A673 (cell line): ENCODE measurements at regions of chr3 and their contacts with region 1.

Region 1: DNA sequence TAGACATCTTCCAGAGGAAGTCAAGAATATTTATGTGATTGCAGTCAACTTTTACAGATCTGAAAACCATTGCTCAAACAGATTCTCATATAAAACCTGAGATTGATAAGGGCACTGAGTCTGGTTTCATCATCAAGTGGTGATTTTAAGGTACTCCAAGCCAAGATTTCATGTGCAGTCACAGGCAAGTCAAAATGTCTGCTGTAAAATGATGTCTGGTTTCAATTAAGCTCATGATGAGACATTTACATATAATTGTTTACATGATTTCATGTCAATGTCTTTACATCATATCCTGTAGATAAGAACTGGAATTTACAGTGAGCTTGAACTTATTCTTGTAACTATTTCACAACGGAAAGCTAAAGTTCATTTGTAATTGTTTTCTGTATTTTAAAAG is 1215.5 kb downstream of the ROBO2 start:
- DNase-seq: peak; percentile 68
- H3K4me3 ChIP-seq: no peak overlapping the region
- H3K27ac ChIP-seq: no peak overlapping the region
- H3K4me1 ChIP-seq: peaks cover 28% of the 10 kb centered on the region
- H3K27me3 ChIP-seq: no peaks in the 10 kb centered on the region
- CTCF ChIP-seq: no peak

Region 2: GRCh38 chr3:78076379-78076778 is 179.0 kb before region 1 on chr3:
- CTCF ChIA-PET with region 1: no interaction called
- POLR2A ChIA-PET with region 1: no interaction called
- intact Hi-C with region 1: no loop called
- DNase-seq: no peak
- H3K4me3 ChIP-seq: no peak overlapping the region
- H3K27ac ChIP-seq: no peak overlapping the region
- H3K4me1 ChIP-seq: no peaks in the 10 kb centered on the region
- H3K27me3 ChIP-seq: no peaks in the 10 kb centered on the region
- CTCF ChIP-seq: no peak

Region 3: DNA sequence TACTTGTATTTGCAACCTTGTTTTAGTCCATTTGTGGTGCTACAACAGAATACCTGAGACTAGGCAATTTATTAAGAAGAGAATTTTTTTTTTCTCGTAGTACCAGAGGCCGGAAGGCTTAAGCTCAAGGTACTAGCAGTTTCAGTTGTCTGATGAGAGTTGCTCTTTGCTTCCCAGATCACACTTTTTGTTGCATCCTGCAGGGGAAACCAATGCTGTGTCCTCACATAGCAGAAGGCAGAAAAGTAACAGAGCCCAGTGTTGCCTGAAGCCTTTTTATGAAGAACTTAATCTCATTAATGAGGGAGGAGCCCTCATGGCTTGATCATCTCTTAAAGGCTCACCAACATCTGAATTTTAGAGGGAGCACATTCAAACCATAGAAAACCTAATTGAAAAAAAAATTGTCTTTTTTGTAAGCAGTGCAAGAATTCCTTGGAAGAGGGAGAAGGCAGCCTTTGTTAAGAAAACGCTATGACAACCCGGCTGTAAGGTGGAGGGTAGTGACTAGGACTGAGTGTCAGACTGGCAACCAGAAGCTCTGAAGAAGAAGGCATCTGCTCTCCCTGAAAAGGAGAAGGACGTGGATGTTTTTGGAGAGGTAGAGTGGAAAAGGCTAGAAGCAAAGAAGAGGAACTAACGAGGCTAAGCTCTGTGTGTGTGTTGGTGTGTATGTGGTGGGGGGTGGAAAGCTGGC is 29.8 kb after region 1 on chr3:
- CTCF ChIA-PET with region 1: no interaction called
- POLR2A ChIA-PET with region 1: interaction called, 19 read pairs
- intact Hi-C with region 1: no loop called
- DNase-seq: peak; percentile 42
- H3K4me3 ChIP-seq: no peak overlapping the region
- H3K27ac ChIP-seq: no peak overlapping the region
- H3K4me1 ChIP-seq: peaks cover 21% of the 10 kb centered on the region
- H3K27me3 ChIP-seq: no peaks in the 10 kb centered on the region
- CTCF ChIP-seq: no peak